ENCODE measurements at regions of chr4 and their contacts with region 1.

Region 1: DNA sequence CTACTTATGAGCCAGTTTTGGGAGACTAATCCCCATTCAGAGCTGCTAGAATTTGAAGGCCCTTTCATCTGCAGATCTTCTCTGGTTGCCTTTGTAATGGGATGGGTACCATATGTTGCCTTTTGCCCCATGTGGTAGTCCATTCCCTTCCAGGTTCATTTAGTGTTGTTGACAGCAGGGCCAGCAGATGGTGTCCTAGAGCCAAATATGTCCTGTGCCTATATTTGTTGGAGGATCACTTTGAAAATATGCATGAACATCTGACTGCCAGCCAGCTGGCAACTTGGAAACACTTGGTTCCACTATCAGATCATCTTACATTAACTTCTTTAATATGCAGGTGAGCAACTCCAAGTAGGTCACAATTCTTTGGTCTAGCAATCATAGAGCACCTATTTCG is 30.4 kb downstream of the CFAP299 start:
- DNase-seq: peak; percentile 82
- ATAC-seq: peak; percentile 75
- H3K4me3 ChIP-seq: no peak overlapping the region
- H3K27ac ChIP-seq: no peak overlapping the region
- H3K4me1 ChIP-seq: peaks cover 15% of the 10 kb centered on the region; the same call in 1 of the 2 replicates
- H3K27me3 ChIP-seq: no peaks in the 10 kb centered on the region
- CTCF ChIP-seq: peak; percentile 82

Region 2: DNA sequence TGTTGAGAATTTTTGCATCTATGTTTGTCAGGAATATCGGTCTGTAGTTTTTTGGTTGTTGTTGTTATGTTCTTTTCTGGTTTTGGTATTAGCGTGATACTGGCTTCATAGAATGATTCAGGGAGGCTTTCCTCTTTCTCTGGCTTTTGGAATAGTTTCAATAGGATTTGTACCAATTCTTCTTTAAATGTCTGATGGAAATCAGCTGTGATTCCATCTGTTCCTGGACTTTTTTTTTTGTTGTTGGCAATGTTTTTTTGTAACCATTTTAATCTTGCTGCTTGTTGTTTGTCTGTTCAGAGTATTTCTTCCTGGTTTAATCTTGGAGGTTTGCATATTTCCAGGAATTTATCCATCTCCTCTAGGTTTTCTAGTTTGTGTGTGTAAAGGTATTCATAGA is 876.4 kb before region 1 on chr4:
- CTCF ChIA-PET with region 1: no interaction called
- POLR2A ChIA-PET with region 1: no interaction called
- intact Hi-C with region 1: no loop called
- DNase-seq: no peak
- ATAC-seq: no peak
- H3K4me3 ChIP-seq: no peak overlapping the region
- H3K27ac ChIP-seq: no peak overlapping the region
- H3K4me1 ChIP-seq: no peaks in the 10 kb centered on the region
- H3K27me3 ChIP-seq: 0 out of 2 replicates have a peak, but pooled peaks cover under 1% of the 10 kb centered on the region
- CTCF ChIP-seq: no peak

Region 3: DNA sequence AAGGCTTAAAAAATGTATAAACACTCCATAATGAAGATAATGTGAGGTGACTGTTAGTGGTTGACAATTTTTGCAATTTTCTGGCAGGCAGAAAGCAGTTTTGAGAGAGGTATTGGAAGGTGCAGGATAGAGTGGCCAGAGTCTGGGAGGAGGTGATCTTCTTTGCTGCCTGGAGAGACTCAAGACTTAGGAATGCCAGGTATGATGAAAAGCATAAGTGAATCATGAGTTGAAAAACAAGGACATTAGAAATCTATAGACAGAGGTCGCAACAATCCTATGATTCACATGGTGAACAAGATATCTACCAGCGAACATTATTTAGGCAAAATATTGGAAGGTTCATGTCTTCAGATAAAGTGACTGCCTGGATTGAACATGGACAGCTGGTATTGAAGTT is 88.1 kb after region 1 on chr4:
- CTCF ChIA-PET with region 1: no interaction called
- POLR2A ChIA-PET with region 1: no interaction called
- intact Hi-C with region 1: loop called (anchors 2 kb)
- DNase-seq: peak; percentile 88
- ATAC-seq: peak; percentile 84
- H3K4me3 ChIP-seq: peak overlapping the region; percentile 42
- H3K27ac ChIP-seq: peak overlapping the region; percentile 90
- H3K4me1 ChIP-seq: peaks cover 51% of the 10 kb centered on the region
- H3K27me3 ChIP-seq: no peaks in the 10 kb centered on the region
- CTCF ChIP-seq: no peak

Region 4: GRCh38 chr4:80619070-80619674 is 253.2 kb after region 1 on chr4:
- CTCF ChIA-PET with region 1: interaction called, 4 read pairs
- POLR2A ChIA-PET with region 1: no interaction called
- intact Hi-C with region 1: loop called (anchors 1 kb)
- DNase-seq: peak; percentile 49
- ATAC-seq: 0 out of 2 replicates have a peak, but pooled peaks have one; percentile 48
- H3K4me3 ChIP-seq: no peak overlapping the region
- H3K27ac ChIP-seq: no peak overlapping the region
- H3K4me1 ChIP-seq: peaks cover 2% of the 10 kb centered on the region; the same call in 1 of the 2 replicates
- H3K27me3 ChIP-seq: no peaks in the 10 kb centered on the region
- CTCF ChIP-seq: peak; percentile 67

Region 5: DNA sequence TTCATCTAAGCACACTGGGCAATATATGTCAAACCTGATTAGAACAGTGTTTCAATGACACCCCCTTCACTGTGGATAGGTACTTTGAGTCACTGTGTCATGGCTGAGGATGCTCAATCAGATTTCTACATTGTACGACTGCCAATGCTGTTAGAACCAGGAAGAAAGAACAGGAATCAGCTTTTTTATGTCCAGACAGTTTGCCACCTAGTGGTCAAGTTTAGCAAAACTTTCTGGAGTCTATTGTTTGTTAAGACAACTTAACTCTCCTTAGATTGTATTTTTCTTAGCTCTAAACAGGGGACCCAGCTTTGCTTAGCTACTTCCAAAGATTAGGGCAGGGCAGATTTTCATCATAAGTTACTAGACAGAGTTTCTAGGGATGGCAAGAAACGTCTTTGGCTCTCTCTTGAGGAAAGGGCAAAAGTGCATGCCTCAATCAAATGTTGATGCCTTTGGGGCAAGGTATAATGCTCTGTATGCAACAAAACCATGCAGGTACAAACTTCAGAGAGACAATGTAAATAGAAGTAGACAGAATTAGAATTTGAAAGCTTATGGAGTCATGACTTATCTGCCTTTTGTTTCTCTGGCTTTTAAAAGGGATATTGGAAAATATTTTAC is 624.1 kb after region 1 on chr4:
- CTCF ChIA-PET with region 1: interaction called, 5 read pairs
- POLR2A ChIA-PET with region 1: no interaction called
- intact Hi-C with region 1: loop called (anchors 1 kb)
- DNase-seq: peak; percentile 80
- ATAC-seq: peak; percentile 58
- H3K4me3 ChIP-seq: no peak overlapping the region
- H3K27ac ChIP-seq: peak overlapping the region; percentile 55
- H3K4me1 ChIP-seq: peaks cover 36% of the 10 kb centered on the region
- H3K27me3 ChIP-seq: no peaks in the 10 kb centered on the region
- CTCF ChIP-seq: peak; percentile 78

Region 6: DNA sequence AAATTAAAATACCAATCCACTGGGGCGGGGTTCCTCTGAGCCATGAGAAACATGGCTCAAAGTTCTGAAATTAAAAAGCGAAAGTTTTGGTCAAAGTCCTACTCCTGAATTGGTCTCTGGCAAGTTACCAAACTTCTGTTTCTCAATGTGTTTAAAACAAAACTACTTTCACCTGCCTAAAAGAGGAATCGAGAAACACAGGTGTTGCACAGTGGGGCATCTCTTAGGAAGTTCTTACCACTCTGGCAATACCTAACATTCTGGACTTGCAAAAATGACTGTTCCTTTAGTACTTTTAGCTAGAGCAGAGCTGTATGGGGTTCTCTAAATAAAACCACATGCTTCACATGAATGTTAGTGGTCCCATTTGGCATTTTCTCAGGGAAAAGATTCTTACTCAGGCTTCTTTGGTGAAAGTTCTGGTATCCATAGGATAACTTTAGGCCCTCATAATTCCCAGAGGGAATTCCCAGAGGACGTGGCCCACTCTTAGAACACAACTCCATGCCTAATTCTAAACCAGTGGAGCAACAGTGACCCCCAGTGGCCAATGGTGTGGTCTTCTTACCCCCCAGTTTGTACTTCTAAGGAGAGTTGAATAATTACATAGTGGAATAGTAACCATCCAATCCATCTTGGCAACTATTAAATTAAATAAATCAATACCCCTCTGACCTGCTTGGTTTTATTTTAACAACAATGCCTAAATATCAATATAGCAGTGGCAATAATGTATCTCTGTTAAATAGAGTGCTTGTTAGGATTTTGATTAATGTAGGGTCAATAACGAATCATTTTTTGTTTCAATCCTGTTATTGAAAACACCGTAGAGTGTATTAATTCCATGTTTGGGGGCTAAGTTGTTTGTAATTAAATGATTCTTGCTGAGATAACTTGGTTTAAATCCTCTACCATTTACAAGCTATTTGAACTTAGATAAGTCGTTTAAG is 686.5 kb after region 1 on chr4:
- CTCF ChIA-PET with region 1: interaction called, 3 read pairs
- POLR2A ChIA-PET with region 1: no interaction called
- intact Hi-C with region 1: loop called (anchors 1 kb)
- DNase-seq: peak; percentile 74
- ATAC-seq: peak; percentile 81
- H3K4me3 ChIP-seq: no peak overlapping the region
- H3K27ac ChIP-seq: no peak overlapping the region
- H3K4me1 ChIP-seq: no peaks in the 10 kb centered on the region
- H3K27me3 ChIP-seq: no peaks in the 10 kb centered on the region
- CTCF ChIP-seq: peak; percentile 80

Region 7: DNA sequence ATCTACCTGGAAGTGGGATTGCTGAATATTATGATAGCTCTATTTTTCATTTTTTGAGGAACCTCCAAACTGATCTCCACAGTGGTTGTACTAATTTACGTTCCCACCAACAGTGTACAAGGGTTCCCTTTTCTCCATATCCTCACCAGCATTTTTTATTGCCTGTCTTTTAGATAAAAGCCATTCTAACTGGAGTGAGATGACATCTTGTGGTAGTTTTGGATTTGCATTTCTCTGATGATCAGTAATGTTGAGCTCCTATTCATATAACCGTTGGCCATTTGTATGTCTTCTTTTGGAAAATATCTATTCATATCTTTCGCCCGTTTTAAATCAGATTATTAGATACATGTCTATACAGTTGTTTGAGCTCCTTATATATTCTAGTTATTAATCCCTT is 1004.0 kb after region 1 on chr4:
- CTCF ChIA-PET with region 1: no interaction called
- POLR2A ChIA-PET with region 1: no interaction called
- intact Hi-C with region 1: loop called (anchors 5 kb)
- DNase-seq: peak; percentile 5
- ATAC-seq: 0 out of 2 replicates have a peak, but pooled peaks have one; percentile 29
- H3K4me3 ChIP-seq: no peak overlapping the region
- H3K27ac ChIP-seq: no peak overlapping the region
- H3K4me1 ChIP-seq: no peaks in the 10 kb centered on the region
- H3K27me3 ChIP-seq: no peaks in the 10 kb centered on the region
- CTCF ChIP-seq: peak; percentile 24; the same call in 1 of the 2 replicates

Measured in PC-3 (cell line).